ENCODE measurements at regions of chr9 and their contacts with region 1.

Region 1: DNA sequence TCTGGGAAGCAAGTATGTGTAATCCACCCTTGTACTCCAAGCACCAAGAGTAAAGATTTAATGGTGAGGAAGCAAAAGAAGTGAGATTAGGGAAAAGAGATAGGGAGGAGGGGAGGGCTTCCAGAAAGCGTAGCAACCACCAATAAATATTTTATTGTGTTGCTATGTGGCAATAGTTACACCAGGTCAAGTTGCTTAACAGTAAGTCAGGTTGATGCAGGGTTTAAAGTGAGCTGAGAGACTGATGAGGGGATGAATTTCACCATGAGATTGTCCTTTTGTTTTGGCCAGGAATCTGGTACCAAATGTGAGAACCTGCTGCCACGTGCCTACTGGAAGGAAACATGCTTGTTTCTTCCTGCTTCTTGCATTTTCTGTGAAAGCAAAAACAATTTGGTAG is 62.7 kb downstream of the PCSK5 start:
- DNase-seq: peak; percentile 23
- H3K4me3 Mint-ChIP-seq: peak overlapping the region; percentile 9
- H3K27ac Mint-ChIP-seq: peak overlapping the region; percentile 79
- H3K4me1 Mint-ChIP-seq: peaks cover 23% of the 10 kb centered on the region
- H3K27me3 Mint-ChIP-seq: no peaks in the 10 kb centered on the region
- CTCF ChIP-seq: no peak

Region 2: GRCh38 chr9:75918154-75918553 is 35.1 kb before region 1 on chr9:
- CTCF ChIA-PET with region 1: interaction called, 3 read pairs
- intact Hi-C with region 1: loop called (anchors 5 kb)
- DNase-seq: peak; percentile 57
- H3K4me3 Mint-ChIP-seq: no peak overlapping the region
- H3K27ac Mint-ChIP-seq: peak overlapping the region; percentile 81
- H3K4me1 Mint-ChIP-seq: peaks cover 64% of the 10 kb centered on the region
- H3K27me3 Mint-ChIP-seq: no peaks in the 10 kb centered on the region
- CTCF ChIP-seq: no peak

Region 3: GRCh38 chr9:75993434-75993833 is 40.2 kb after region 1 on chr9:
- CTCF ChIA-PET with region 1: no interaction called
- intact Hi-C with region 1: loop called (anchors 1 kb)
- DNase-seq: peak; percentile 9
- H3K4me3 Mint-ChIP-seq: peak overlapping the region; percentile 39
- H3K27ac Mint-ChIP-seq: peak overlapping the region; percentile 89
- H3K4me1 Mint-ChIP-seq: peaks cover 58% of the 10 kb centered on the region
- H3K27me3 Mint-ChIP-seq: no peaks in the 10 kb centered on the region
- CTCF ChIP-seq: no peak

Measured in Calu3 (cell line).